ENCODE measurements at regions of chr15 and their contacts with region 1.

Region 1: DNA sequence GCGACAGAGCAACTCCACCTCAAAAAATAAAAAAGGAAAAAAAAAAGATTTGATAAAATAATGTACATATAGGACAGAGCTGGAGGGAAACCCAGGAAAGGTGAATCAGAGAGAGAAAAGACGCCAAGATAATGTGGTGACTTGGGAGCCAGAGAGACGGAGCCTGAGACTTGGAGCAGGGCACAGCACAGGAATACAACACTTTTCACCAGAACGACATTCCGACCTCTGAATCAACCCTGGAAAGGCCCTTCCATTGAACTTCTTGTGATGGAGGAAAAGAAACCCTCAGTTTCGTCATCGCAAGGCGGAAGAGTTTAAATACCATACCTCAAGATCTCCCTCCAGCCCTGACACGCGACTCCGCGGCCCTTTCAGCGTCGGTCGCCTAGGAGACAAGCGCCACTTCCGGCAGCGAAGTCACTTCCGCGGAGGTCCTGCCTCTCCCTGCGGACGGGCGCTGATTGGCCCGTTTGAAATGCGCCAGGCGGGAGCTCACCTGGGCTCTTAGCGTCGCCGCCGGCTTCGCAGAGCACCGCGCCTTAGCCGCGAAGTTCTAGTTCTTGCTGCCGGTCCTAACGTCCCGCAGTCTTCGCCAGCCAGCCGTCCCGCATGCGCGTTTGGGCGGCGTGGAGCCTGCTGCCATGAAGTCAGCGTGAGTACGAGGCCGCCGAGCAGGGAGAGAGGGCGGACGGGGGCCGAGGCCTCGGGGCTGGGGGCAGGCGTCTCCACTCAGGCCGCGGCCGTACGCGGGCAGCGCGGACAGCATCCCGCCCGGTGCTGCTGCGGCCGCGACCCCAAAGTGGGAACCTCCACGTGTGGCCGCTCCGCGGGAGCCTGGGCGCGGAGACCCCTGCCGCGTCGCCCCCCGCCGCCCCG is at the start of gene KIF23:
- DNase-seq: peak; percentile 82
- H3K4me3 ChIP-seq: peak within 1 kb of the TSS; percentile 92
- H3K27ac ChIP-seq: peak within 1 kb of the TSS; percentile 96
- H3K27me3 ChIP-seq: no peaks in the 10 kb centered on the region
- CTCF ChIP-seq: no peak
- polyA plus RNA-seq, gene KIF23: 14.6 and 20.0 TPM in 2 replicates

Region 2: GRCh38 chr15:69403594-69403993 is 10.5 kb before region 1 on chr15:
- CTCF ChIA-PET with region 1: no interaction called
- POLR2A ChIA-PET with region 1: interaction called, 16 read pairs
- DNase-seq: peak; percentile 72
- H3K4me3 ChIP-seq: no peak overlapping the region
- H3K27ac ChIP-seq: no peak overlapping the region
- H3K27me3 ChIP-seq: no peaks in the 10 kb centered on the region
- CTCF ChIP-seq: no peak

Region 3: GRCh38 chr15:69452692-69453521 is 38.8 kb after region 1 on chr15 and contains the start of gene RPLP1:
- CTCF ChIA-PET with region 1: interaction called, 3 read pairs
- POLR2A ChIA-PET with region 1: interaction called, 33 read pairs
- DNase-seq: peak; percentile 92
- H3K4me3 ChIP-seq: peak within 1 kb of the TSS; percentile 85
- H3K27ac ChIP-seq: peak within 1 kb of the TSS; percentile 66
- H3K27me3 ChIP-seq: no peaks in the 10 kb centered on the region
- CTCF ChIP-seq: no peak
- polyA plus RNA-seq, gene RPLP1: 722 and 1,256 TPM in 2 replicates

Region 4: DNA sequence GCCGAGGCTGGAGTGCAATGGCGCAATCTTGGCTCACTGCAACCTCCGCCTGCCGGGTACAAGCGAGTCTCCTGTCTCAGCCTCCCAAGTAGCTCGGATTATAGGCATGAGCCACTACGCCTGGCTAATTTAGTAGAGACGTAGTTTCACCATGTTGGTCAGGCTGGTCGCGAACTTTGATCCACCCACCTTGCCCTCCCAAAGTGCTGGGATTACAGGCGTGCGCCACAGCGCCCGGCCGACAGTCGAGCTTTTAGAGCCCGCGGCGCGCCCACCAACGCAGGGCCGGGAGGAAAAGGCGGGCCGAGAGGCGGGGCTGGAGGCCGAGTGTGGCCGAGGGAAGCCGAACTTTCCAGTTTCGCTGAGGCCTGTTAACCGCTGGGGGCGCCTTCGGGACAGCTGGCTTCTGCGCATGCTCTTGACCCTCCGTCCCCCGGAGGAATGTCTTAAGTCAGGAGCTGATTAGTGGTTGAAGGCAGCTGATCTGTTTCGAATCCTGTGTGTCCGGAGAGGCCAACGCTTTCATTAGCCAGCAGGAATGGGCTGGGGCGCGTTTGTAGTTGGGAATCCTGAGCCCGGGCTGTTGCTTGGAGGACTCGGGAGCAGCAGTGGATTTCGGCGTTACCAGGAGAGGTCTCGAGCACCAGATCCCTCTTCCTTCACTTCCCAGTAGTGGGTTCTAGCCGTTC is 48.6 kb after region 1 on chr15:
- CTCF ChIA-PET with region 1: interaction called, 13 read pairs
- POLR2A ChIA-PET with region 1: interaction called, 6 read pairs
- DNase-seq: peak; percentile 98
- H3K4me3 ChIP-seq: peak overlapping the region; percentile 61
- H3K27ac ChIP-seq: peak overlapping the region; percentile 98
- H3K27me3 ChIP-seq: no peaks in the 10 kb centered on the region
- CTCF ChIP-seq: peak; percentile 89